ENCODE measurements at regions of chr5 and their contacts with region 1.

Region 1: DNA sequence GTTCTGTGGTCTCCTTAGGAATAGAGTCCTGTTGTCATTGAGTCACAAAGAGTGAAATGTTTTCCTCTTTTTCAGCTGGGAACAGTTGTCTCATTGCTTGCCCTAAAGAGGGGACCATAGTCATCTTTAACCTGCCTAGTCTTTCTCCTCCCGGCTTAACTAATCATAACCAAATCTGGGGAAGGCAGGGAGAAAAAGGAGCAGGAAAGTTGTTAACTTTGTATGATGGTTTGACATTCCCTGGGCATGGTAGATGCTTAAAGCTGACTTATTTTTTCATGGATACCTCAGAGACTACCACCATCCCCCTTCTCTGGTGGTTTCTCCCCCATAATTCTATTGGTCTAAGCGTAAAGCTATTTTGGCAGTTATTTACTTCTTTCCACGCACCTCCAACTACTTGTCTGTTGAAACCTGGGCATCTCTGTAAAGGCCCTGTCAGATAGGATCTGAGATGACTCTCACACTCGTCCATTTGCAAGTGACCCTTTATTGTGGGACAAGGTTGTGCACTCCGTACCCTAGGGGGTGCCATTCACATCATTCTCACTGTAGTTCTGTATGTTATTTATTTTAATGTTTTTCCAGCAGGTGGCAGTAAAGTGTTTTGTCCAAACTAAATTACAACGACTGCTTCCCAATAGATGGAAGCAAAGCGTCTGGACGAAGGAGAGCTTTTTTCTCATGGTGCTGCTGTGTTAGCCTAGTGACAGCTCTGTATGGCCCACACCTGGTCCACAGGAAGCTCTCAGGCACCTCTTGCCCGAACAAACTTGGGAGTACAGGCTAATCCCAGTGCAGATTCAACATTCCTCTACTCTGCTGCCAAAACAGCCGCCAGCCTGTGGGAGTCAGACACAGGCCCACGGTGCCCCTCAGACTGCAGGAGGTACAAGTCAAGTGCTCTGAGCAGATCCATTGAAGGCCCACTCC is 3.0 kb upstream of the FAM13B start:
- DNase-seq: peak; percentile 13 to 81 (median 65)
- ATAC-seq: peak; percentile 50 to 55
- H3K4me3 Mint-ChIP-seq: peak overlapping the region in 5 of 10 donors; percentile 56 to 90 (median 66)
- H3K27ac Mint-ChIP-seq: peak overlapping the region in 7 of 10 donors; percentile 8 to 80 (median 55)
- H3K4me1 Mint-ChIP-seq: peaks cover 15 to 32% (median 27%) of the 10 kb centered on the region in 4 donors
- H3K27me3 Mint-ChIP-seq: peaks cover 0 to 2% (median 0%) of the 10 kb centered on the region in 5 donors

Region 2: GRCh38 chr5:138051441-138052296 is 15.8 kb after region 1 on chr5:
- POLR2A ChIA-PET with region 1: no interaction called
- DNase-seq: no peak
- ATAC-seq: no peak
- H3K4me3 Mint-ChIP-seq: no peak overlapping the region
- H3K27ac Mint-ChIP-seq: no peak overlapping the region
- H3K4me1 Mint-ChIP-seq: peaks cover 0 to 3% (median 0%) of the 10 kb centered on the region in 4 donors
- H3K27me3 Mint-ChIP-seq: no peaks in the 10 kb centered on the region

Region 3: GRCh38 chr5:138069068-138069600 is 33.3 kb after region 1 on chr5:
- POLR2A ChIA-PET with region 1: interaction called, 10 read pairs
- DNase-seq: peak in 1 of 10 donors; percentile 5
- ATAC-seq: no peak
- H3K4me3 Mint-ChIP-seq: no peak overlapping the region
- H3K27ac Mint-ChIP-seq: no peak overlapping the region
- H3K4me1 Mint-ChIP-seq: peaks cover 3 to 6% (median 5%) of the 10 kb centered on the region in 4 donors
- H3K27me3 Mint-ChIP-seq: peaks cover 0 to 5% (median 4%) of the 10 kb centered on the region in 5 donors